Activated naive CD4-positive, alpha-beta T cell treated with anti-CD3 and anti-CD28 coated beads for 36 hours (primary cell): ENCODE measurements at regions of chr10 and their contacts with region 1.

Region 1: GRCh38 chr10:97210543-97210961 is 24.8 kb upstream of the SLIT1 start:
- DNase-seq: peak; percentile 86
- H3K4me3 Mint-ChIP-seq: no peak overlapping the region
- H3K27ac Mint-ChIP-seq: no peak overlapping the region
- H3K4me1 Mint-ChIP-seq: no peaks in the 10 kb centered on the region
- H3K27me3 Mint-ChIP-seq: peaks cover 2% of the 10 kb centered on the region

Region 2: DNA sequence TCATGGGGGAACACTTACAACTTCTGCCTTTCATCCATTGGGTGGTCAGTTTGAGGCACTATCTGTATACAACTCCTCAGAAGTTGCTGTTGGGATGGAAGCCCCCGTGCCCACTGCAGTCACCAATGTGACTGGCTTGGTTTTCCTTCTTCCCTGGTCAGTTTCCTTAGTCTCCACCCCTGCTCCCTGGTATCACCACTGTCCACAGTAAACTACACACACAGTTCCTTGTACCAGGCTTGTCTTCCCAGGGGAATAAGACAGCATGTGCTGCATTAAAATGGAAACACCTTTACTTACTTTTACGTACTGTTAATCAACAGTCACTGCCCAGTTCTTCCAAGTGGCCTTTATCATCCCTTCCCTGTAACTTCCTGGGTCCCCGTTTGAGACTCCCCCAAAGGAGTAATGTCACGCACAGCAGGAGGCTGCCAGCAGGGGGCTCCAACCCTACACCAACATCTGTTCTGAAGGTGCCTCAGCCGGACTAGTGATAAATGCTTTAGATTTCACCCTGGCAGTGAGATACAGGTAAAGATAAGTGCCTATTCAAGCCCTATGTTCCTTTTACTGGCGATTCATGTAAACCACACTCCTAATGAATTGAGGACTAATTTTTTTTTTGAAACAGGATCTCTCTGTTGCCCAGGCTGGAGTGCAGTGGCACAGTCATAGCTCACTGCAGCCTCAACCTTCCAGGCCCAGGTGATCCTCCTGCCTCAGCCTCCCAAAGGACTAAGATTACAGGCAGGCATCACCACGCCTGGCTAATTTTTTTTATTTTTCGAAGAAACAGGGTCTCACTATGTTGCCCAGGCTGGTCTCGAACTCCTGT is 444.9 kb before region 1 on chr10:
- CTCF ChIA-PET with region 1: no interaction called
- intact Hi-C with region 1: loop called (anchors 5 kb)
- DNase-seq: peak; percentile 86
- H3K4me3 Mint-ChIP-seq: no peak overlapping the region
- H3K27ac Mint-ChIP-seq: no peak overlapping the region
- H3K4me1 Mint-ChIP-seq: peaks cover 2% of the 10 kb centered on the region
- H3K27me3 Mint-ChIP-seq: no peaks in the 10 kb centered on the region

Region 3: DNA sequence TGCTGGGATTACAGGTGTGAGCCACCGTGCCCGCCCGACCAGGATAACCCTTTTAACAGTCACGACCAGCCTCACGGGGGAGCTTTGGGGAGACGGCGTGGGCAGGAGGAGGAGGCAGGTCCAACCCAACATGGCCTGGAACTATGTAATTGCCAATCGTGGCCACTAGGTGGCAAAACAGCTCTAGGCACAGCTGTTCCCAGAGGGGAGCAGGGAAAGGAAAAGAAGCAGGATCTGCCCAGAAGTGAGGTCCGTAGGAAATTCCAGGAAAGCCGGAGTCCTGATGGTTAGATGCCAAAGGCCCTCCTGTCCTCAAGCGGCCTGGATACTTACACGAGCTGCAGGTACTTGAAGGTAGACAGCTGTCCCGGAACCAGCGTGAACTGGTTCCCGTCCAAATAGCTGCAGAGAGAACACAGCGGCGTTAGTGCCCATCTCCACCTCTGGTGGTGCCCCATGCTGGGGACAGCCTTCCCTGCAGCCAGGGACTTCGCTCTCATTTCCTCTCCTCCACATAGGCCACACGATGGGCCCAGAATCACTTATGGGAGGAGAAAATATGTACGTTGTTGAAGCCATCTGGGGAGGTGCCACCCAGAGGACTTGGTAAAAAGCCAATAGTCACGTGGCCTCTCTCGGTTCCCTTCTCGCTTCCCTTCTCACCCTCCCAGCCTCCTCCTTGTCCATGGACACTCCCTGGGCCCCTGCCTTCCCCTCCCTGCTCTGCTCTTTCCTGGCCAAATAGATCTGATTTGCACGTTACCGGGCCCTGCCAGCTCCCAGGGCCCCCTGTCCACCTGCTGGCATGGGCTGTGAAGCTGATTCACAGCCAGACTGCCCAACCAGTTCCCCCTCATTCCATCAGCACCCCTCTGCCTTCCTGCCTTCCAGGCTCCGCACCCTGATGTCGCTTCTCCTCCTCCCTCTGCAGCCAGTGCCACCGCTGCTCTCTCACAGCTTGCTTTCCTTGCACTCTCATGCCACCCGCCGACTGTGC is 172.9 kb before region 1 on chr10:
- CTCF ChIA-PET with region 1: interaction called, 63 read pairs
- intact Hi-C with region 1: loop called (anchors 1 kb)
- DNase-seq: peak; percentile 86
- H3K4me3 Mint-ChIP-seq: peak overlapping the region; percentile 48
- H3K27ac Mint-ChIP-seq: no peak overlapping the region
- H3K4me1 Mint-ChIP-seq: peaks cover 10% of the 10 kb centered on the region
- H3K27me3 Mint-ChIP-seq: no peaks in the 10 kb centered on the region

Region 4: GRCh38 chr10:97128516-97129154 is 81.9 kb before region 1 on chr10:
- CTCF ChIA-PET with region 1: interaction called, 12 read pairs
- intact Hi-C with region 1: no loop called
- DNase-seq: no peak
- H3K4me3 Mint-ChIP-seq: no peak overlapping the region
- H3K27ac Mint-ChIP-seq: no peak overlapping the region
- H3K4me1 Mint-ChIP-seq: no peaks in the 10 kb centered on the region
- H3K27me3 Mint-ChIP-seq: no peaks in the 10 kb centered on the region

Region 5: GRCh38 chr10:97153270-97153850 is 57.2 kb before region 1 on chr10:
- CTCF ChIA-PET with region 1: no interaction called
- intact Hi-C with region 1: no loop called
- DNase-seq: no peak
- H3K4me3 Mint-ChIP-seq: no peak overlapping the region
- H3K27ac Mint-ChIP-seq: no peak overlapping the region
- H3K4me1 Mint-ChIP-seq: no peaks in the 10 kb centered on the region
- H3K27me3 Mint-ChIP-seq: no peaks in the 10 kb centered on the region

Region 6: GRCh38 chr10:97222326-97222961 is 11.9 kb after region 1 on chr10:
- CTCF ChIA-PET with region 1: interaction called, 50 read pairs
- intact Hi-C with region 1: no loop called
- DNase-seq: no peak
- H3K4me3 Mint-ChIP-seq: no peak overlapping the region
- H3K27ac Mint-ChIP-seq: no peak overlapping the region
- H3K4me1 Mint-ChIP-seq: peaks cover 24% of the 10 kb centered on the region
- H3K27me3 Mint-ChIP-seq: no peaks in the 10 kb centered on the region

Region 7: GRCh38 chr10:97584060-97584797 is 373.7 kb after region 1 on chr10 and contains the start of gene HOGA1:
- CTCF ChIA-PET with region 1: no interaction called
- intact Hi-C with region 1: no loop called
- DNase-seq: no peak
- H3K4me3 Mint-ChIP-seq: no peak within 1 kb of the TSS
- H3K27ac Mint-ChIP-seq: no peak within 1 kb of the TSS
- H3K4me1 Mint-ChIP-seq: no peaks in the 10 kb centered on the region
- H3K27me3 Mint-ChIP-seq: no peaks in the 10 kb centered on the region
- total RNA-seq, gene HOGA1: not detected